Colonic mucosa (tissue), 4 donors: ENCODE measurements at regions of chr12 and their contacts with region 1.

Region 1: GRCh38 chr12:51923501-51924271 is 16.4 kb downstream of the ACVRL1 start:
- DNase-seq: peak; percentile 76
- H3K4me3 ChIP-seq: no peak overlapping the region
- H3K27ac ChIP-seq: peak overlapping the region; percentile 64
- H3K4me1 ChIP-seq: peaks cover 10% of the 10 kb centered on the region
- H3K27me3 ChIP-seq: no peaks in the 10 kb centered on the region
- CTCF ChIP-seq: peak; percentile 92

Region 2: DNA sequence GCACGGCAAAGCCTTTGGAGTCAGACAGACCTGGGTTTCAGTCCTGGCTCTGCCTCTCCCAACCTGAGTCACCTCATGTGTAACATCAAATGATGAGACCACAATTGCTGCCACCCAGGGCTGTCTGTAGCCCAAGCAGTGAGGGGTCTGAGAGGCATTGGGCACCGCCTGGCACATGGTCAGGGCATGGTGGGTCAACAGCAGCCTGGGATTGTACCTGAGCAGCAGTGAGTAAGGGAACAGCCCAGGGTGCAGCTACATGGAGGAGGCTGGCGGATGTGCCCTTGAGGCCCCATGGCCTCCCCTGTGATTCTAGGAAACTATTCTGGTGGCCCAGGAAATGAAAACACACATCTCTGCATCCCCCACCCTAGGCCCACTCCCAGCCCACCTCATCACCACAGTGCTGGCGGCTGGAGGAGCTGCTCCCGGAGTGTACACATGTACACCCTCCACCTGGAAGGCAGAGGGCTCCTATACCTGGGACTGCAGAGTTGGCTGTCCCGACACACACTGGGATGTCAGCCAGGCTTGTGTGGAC is 28.1 kb before region 1 on chr12:
- intact Hi-C with region 1: loop called (anchors 1 kb)
- DNase-seq: peak; percentile 19
- H3K4me3 ChIP-seq: no peak overlapping the region
- H3K27ac ChIP-seq: no peak overlapping the region
- H3K4me1 ChIP-seq: peaks cover 5% of the 10 kb centered on the region
- H3K27me3 ChIP-seq: no peaks in the 10 kb centered on the region
- CTCF ChIP-seq: no peak

Region 3: DNA sequence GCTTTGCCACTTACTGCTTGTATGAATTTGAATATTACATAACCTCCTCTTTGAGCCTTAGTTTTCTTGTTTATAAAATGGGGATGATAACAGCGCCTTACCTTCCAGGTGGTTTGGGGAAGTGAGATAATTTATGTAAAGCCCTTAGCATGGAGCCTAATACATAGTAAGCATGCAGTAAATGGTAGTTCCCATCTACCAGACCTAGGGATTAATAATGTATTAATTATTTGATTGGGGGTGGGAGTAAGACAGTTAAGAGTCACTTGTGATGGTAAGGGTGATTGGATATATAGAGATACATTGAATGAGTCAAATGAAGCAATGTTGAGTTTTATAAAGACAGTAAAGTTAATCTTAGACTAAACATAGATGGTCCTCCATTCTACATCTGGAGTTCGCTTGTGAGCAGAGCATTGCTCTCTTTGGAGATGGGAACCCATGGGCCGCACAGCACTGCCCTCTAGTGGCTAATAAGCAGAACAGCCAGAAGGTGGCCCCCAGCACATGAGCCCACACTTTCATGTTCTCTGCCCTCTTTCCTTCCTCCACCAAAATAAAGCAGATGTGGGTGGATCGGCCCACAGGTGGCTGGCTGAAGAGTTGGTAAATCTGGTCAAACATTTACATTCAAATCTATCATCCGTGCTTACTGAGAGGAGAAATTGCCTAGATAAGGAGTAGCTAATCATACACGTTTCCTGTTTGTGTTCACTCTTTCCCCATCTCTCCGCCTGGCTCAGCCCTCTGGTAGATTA is 56.5 kb after region 1 on chr12:
- intact Hi-C with region 1: loop called (anchors 2 kb)
- DNase-seq: peak; percentile 70
- H3K4me3 ChIP-seq: no peak overlapping the region
- H3K27ac ChIP-seq: no peak overlapping the region
- H3K4me1 ChIP-seq: no peaks in the 10 kb centered on the region
- H3K27me3 ChIP-seq: no peaks in the 10 kb centered on the region
- CTCF ChIP-seq: peak; percentile 95

Region 4: DNA sequence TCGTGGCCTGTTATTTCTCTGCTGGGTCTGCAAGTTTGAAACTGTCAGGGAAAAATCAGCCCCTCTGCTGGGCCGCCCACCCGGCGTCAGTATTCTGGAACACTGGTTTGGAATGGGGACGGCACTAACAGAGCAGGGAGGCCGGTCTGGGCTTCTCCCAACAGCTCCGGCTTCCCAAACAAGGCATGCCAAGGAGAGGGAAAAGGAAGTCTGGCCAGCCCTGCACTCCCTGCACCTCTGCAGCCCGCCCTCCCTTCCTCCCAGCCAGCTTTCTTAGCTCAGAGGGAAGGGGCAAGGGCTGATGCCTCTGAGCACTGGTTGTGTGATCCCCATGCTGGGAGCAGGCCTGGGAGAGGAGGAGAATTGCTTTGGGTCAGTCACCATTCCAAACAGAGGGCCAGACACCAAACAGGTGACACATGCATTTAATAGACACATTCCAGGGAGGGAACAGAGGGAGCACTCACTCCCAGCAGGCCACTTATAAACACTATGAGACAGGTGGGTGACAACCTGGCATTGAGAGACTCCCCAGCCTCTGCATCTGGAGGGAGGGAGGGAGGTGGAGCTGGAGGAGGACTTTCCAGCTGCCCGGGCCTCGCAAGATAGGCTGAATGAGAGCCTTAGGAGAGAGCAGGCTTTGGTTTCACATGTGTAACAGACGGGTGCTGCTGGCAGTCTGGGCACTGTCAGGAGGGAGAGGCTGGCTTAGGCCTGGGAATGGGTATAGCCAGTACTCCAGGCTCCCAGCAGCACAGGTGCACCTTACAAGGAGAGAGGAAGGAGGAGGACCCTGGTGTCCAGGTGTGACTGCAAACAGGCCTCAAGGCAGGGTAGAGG is 500.2 kb after region 1 on chr12:
- intact Hi-C with region 1: no loop called
- DNase-seq: no peak
- H3K4me3 ChIP-seq: no peak overlapping the region
- H3K27ac ChIP-seq: no peak overlapping the region
- H3K4me1 ChIP-seq: no peaks in the 10 kb centered on the region
- H3K27me3 ChIP-seq: no peaks in the 10 kb centered on the region
- CTCF ChIP-seq: no peak